ENCODE measurements at regions of chr13 and their contacts with region 1.

Region 1: GRCh38 chr13:33212396-33212795 is 73.2 kb downstream of the STARD13 start:
- DNase-seq: no peak
- ATAC-seq: no peak

Region 2: GRCh38 chr13:33233547-33233946 is 21.2 kb after region 1 on chr13:
- intact Hi-C with region 1: loop called (anchors 1 kb)
- DNase-seq: no peak
- ATAC-seq: no peak

Measured in sciatic nerve (tissue), 2 donors.